ENCODE measurements at regions of chr7 and their contacts with region 1.

Region 1: GRCh38 chr7:8217200-8218068 is 44.5 kb downstream of the ICA1 start:
- DNase-seq: peak in 5 of 14 experiments; percentile 8 to 84 (median 75)
- ATAC-seq: peak; percentile 71
- H3K4me3 ChIP-seq: no peak overlapping the region
- H3K4me3 Mint-ChIP-seq: no peak overlapping the region
- H3K27ac ChIP-seq: no peak overlapping the region
- H3K27ac Mint-ChIP-seq: no peak overlapping the region
- H3K4me1 ChIP-seq: no peaks in the 10 kb centered on the region
- H3K4me1 Mint-ChIP-seq: peaks cover 5% of the 10 kb centered on the region
- H3K27me3 ChIP-seq: no peaks in the 10 kb centered on the region
- H3K27me3 Mint-ChIP-seq: no peaks in the 10 kb centered on the region
- CTCF ChIP-seq: peak; percentile 87

Region 2: GRCh38 chr7:7424151-7424873 is 793.1 kb before region 1 on chr7:
- CTCF ChIA-PET with region 1: no interaction called
- POLR2A ChIA-PET with region 1: no interaction called
- intact Hi-C with region 1: loop called (anchors 5 kb)
- DNase-seq: peak in 13 of 14 experiments; percentile 5 to 65 (median 19)
- ATAC-seq: peak; percentile 67
- H3K4me3 ChIP-seq: peak overlapping the region; percentile 55
- H3K4me3 Mint-ChIP-seq: peak overlapping the region; percentile 90
- H3K27ac ChIP-seq: no peak overlapping the region
- H3K27ac Mint-ChIP-seq: peak overlapping the region; percentile 19
- H3K4me1 ChIP-seq: no peaks in the 10 kb centered on the region
- H3K4me1 Mint-ChIP-seq: no peaks in the 10 kb centered on the region
- H3K27me3 ChIP-seq: no peaks in the 10 kb centered on the region
- H3K27me3 Mint-ChIP-seq: no peaks in the 10 kb centered on the region
- CTCF ChIP-seq: peak; percentile 56

Region 3: GRCh38 chr7:7535691-7536090 is 681.7 kb before region 1 on chr7 and contains the start of gene COL28A1:
- CTCF ChIA-PET with region 1: no interaction called
- POLR2A ChIA-PET with region 1: no interaction called
- intact Hi-C with region 1: loop called (anchors 2 to 5 kb)
- DNase-seq: no peak
- ATAC-seq: no peak
- H3K4me3 ChIP-seq: no peak within 1 kb of the TSS
- H3K4me3 Mint-ChIP-seq: no peak within 1 kb of the TSS
- H3K27ac ChIP-seq: no peak within 1 kb of the TSS
- H3K27ac Mint-ChIP-seq: no peak within 1 kb of the TSS
- H3K4me1 ChIP-seq: no peaks in the 10 kb centered on the region
- H3K4me1 Mint-ChIP-seq: no peaks in the 10 kb centered on the region
- H3K27me3 ChIP-seq: no peaks in the 10 kb centered on the region
- H3K27me3 Mint-ChIP-seq: peaks cover 8% of the 10 kb centered on the region
- CTCF ChIP-seq: no peak
- total RNA-seq, gene COL28A1: 0.22 TPM in 1 of 2 experiments, not detected in the other

Region 4: DNA sequence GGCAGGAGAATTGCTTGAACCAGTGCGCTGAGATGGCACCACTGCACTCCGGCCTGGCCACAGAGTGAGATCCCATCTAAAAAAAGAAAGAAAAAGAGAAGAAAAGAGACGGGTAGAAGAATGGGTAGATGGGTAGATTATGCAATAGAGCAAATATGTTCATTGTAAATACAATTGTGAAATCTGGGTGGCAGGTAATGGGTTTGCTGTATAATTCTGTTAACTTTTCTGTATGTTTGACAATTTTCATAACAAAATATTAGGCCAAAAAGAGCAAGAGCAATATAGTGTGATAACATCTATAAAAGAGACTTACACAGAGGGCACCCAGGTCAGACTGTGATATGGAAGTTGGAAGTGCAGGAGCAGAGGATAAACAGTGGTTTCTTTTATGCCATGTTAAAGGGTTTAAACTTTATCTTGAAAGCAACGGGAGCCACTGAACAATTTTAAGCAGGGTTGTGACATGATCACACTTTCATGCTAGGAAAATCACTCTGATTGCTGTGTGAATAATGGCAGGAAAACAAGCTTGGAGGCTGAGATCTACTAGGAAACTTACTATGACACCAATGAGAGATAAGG is 675.1 kb before region 1 on chr7:
- CTCF ChIA-PET with region 1: no interaction called
- POLR2A ChIA-PET with region 1: no interaction called
- intact Hi-C with region 1: loop called (anchors 2 to 5 kb)
- DNase-seq: no peak
- ATAC-seq: no peak
- H3K4me3 ChIP-seq: no peak overlapping the region
- H3K4me3 Mint-ChIP-seq: no peak overlapping the region
- H3K27ac ChIP-seq: no peak overlapping the region
- H3K27ac Mint-ChIP-seq: no peak overlapping the region
- H3K4me1 ChIP-seq: no peaks in the 10 kb centered on the region
- H3K4me1 Mint-ChIP-seq: no peaks in the 10 kb centered on the region
- H3K27me3 ChIP-seq: no peaks in the 10 kb centered on the region
- H3K27me3 Mint-ChIP-seq: peaks cover 9% of the 10 kb centered on the region
- CTCF ChIP-seq: no peak

Region 5: GRCh38 chr7:7595451-7595850 is 622.0 kb before region 1 on chr7:
- CTCF ChIA-PET with region 1: interaction called, 8 read pairs
- POLR2A ChIA-PET with region 1: no interaction called
- intact Hi-C with region 1: loop called (anchors 1 to 2 kb)
- DNase-seq: peak in 3 of 14 experiments; percentile 56
- ATAC-seq: peak; percentile 58
- H3K4me3 ChIP-seq: no peak overlapping the region
- H3K4me3 Mint-ChIP-seq: no peak overlapping the region
- H3K27ac ChIP-seq: no peak overlapping the region
- H3K27ac Mint-ChIP-seq: no peak overlapping the region
- H3K4me1 ChIP-seq: no peaks in the 10 kb centered on the region
- H3K4me1 Mint-ChIP-seq: no peaks in the 10 kb centered on the region
- H3K27me3 ChIP-seq: no peaks in the 10 kb centered on the region
- H3K27me3 Mint-ChIP-seq: no peaks in the 10 kb centered on the region
- CTCF ChIP-seq: peak; percentile 54

Region 6: GRCh38 chr7:7968543-7969305 is 248.7 kb before region 1 on chr7 and contains the start of gene GLCCI1:
- CTCF ChIA-PET with region 1: no interaction called
- POLR2A ChIA-PET with region 1: no interaction called
- intact Hi-C with region 1: no loop called
- DNase-seq: peak; percentile 91 to 99 (median 96)
- ATAC-seq: peak; percentile 90
- H3K4me3 ChIP-seq: peak within 1 kb of the TSS; percentile 86
- H3K4me3 Mint-ChIP-seq: peak within 1 kb of the TSS; percentile 94
- H3K27ac ChIP-seq: peak within 1 kb of the TSS; percentile 69 to 92
- H3K27ac Mint-ChIP-seq: peak within 1 kb of the TSS; percentile 78
- H3K4me1 ChIP-seq: peaks cover 14% of the 10 kb centered on the region
- H3K4me1 Mint-ChIP-seq: peaks cover 36% of the 10 kb centered on the region
- H3K27me3 ChIP-seq: no peaks in the 10 kb centered on the region
- H3K27me3 Mint-ChIP-seq: no peaks in the 10 kb centered on the region
- CTCF ChIP-seq: no peak
- total RNA-seq, gene GLCCI1: 22.2 to 22.3 TPM